A673 (cell line): ENCODE measurements at regions of chr14 and their contacts with region 1.

Region 1: DNA sequence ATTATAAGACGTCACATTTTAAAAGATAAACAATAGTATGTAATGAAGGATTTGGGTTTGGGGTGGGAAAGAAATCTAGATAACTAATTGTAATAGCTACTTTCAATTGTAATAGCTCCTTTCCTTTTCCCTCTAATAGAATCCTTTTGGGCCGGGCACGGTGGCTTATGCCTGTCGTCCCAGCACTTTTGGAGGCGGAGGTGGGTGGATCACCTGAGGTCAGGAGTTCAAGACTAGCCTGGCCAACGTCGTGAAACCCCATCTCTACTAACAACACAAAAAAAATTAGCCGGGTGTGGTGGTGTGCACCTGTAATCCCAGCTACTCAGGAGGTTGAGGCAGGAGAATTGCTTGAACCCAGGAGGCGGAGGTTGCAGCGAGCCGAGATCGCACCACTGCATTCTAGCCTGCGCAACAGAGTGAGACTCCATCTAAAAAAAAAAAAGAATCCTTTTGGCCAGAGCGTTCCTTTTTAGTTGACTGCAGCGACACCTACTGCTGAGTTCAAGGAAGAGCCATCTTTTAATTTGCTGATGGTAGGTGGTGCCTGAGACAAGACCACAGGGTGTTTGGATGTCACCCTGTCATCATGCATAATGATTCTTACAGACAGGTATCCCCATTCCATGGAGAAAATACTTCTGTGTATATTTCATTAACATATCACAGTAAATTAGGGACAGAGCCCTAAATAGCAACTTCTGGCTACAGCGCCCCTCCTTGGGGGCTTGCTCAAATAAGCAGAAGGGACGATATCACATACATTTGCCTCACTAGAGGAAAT is 79.5 kb downstream of the ARMH4 start:
- DNase-seq: peak; percentile 90
- H3K4me3 ChIP-seq: peak overlapping the region; percentile 29
- H3K27ac ChIP-seq: peak overlapping the region; percentile 77
- H3K4me1 ChIP-seq: peaks cover 41% of the 10 kb centered on the region
- H3K27me3 ChIP-seq: no peaks in the 10 kb centered on the region
- CTCF ChIP-seq: peak; percentile 79

Region 2: GRCh38 chr14:57029620-57030253 is 1042.7 kb before region 1 on chr14:
- CTCF ChIA-PET with region 1: no interaction called
- POLR2A ChIA-PET with region 1: no interaction called
- intact Hi-C with region 1: no loop called
- DNase-seq: no peak
- H3K4me3 ChIP-seq: no peak overlapping the region
- H3K27ac ChIP-seq: no peak overlapping the region
- H3K4me1 ChIP-seq: peaks cover 6% of the 10 kb centered on the region
- H3K27me3 ChIP-seq: no peaks in the 10 kb centered on the region
- CTCF ChIP-seq: no peak

Region 3: DNA sequence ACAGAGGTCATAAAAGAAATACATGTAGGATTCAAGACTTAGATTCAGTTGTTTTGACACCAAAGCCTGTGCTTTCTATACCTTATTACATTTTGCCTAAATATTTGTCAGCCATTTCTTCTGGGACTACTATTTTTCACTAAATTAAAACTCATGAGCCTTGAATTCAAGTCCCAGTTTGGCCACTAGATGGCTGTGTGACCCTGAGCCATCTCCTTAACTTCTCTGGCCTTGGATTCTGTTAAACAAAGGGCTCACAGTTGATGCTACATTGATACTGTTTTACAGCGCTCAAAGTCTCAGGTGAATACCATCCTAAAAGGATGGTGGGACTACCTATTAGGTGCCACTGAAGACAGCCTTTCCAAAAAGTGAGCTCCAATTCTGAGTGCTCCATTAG is 539.3 kb before region 1 on chr14:
- CTCF ChIA-PET with region 1: no interaction called
- POLR2A ChIA-PET with region 1: no interaction called
- intact Hi-C with region 1: loop called (anchors 1 kb)
- DNase-seq: peak; percentile 72
- H3K4me3 ChIP-seq: no peak overlapping the region
- H3K27ac ChIP-seq: no peak overlapping the region
- H3K4me1 ChIP-seq: no peaks in the 10 kb centered on the region
- H3K27me3 ChIP-seq: no peaks in the 10 kb centered on the region
- CTCF ChIP-seq: peak; percentile 64

Region 4: DNA sequence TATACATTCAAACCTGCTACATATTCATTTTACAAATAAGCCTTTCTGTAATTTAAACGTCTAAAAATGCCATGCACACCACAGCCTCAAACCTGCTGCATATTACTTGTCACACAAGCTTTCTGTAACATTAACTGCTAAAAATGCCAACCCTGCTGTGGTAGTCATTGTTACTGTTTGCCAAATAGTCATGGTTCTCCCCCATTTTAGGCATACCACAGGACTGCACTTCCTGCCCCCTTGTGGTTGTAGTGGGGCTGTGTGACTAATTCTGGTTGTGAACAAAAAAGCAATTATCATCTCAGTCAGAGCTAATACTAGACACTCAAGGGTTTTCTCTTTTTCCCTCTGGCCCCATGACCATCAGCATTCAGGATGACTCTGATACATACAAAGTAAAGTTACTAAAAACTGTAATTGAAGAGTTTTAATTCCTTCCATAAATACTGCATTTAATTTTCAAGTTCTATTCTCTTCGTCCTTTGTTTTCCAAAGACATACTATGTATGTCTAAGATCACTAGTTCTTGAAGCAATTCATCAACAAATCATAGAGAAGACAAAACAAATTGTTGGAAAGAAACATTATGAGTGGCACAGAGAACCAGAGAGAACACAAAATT is 200.9 kb before region 1 on chr14:
- CTCF ChIA-PET with region 1: no interaction called
- POLR2A ChIA-PET with region 1: no interaction called
- intact Hi-C with region 1: loop called (anchors 2 kb)
- DNase-seq: peak; percentile 90
- H3K4me3 ChIP-seq: no peak overlapping the region
- H3K27ac ChIP-seq: no peak overlapping the region
- H3K4me1 ChIP-seq: peaks cover 14% of the 10 kb centered on the region
- H3K27me3 ChIP-seq: no peaks in the 10 kb centered on the region
- CTCF ChIP-seq: peak; percentile 91

Region 5: DNA sequence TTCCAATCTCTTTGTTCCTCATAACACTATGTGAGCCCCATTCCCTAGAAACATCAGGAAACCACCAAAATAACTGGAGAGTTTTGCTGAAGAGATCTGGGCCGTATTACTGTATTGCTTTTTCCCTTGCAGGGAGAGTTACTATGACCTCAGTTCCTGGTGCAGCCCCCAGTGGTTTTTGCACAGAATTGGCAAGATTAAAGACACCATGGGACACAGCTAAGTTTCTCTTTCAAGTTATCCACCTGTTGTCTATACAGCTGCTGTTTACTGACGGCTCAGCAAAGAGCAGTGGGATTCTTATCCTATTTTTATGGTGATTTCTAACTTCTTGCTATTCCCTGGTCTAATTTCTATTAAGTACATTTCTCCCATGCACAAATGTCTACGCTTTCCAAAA is 129.4 kb before region 1 on chr14:
- CTCF ChIA-PET with region 1: no interaction called
- POLR2A ChIA-PET with region 1: no interaction called
- intact Hi-C with region 1: loop called (anchors 5 kb)
- DNase-seq: peak; percentile 62
- H3K4me3 ChIP-seq: peak overlapping the region; percentile 4
- H3K27ac ChIP-seq: peak overlapping the region; percentile 78
- H3K4me1 ChIP-seq: peaks cover 32% of the 10 kb centered on the region
- H3K27me3 ChIP-seq: no peaks in the 10 kb centered on the region
- CTCF ChIP-seq: no peak

Region 6: DNA sequence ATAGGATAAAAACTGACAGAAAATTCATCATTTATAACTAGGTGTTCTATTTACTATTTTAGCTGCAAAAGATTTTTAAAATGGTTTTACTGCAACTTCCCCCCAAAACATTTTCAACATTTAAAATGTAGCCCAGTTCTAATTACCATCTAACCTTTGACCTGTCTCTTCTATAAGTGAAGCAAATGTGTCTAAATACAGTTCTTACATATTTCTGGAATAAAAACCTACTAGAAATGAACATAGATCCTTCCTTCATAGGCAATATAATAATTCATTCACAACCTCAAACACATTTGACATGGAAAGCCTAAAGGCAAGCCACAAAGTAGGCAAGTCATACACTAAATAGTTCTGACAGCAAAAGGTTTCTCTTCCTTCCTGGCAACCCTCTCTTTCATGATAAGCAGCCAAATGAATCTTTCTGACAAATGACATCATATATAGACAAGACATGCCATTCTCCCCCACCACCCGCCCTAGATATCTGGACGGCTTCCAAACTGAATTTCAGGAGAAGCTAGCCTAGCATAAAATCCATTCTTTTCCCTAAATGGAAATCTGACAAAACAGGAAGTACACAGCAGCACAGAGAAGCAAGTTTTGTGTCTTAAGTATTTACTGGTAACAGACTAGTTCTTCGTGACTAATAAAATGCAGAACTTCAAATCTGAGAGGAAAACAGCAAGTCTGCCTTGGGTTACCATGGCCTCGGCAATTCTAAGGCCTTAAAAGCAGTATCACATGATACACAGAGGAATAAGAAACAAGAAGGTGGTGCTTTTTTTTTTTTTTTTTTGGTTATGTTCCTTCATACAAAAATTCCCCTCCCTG is 208.7 kb after region 1 on chr14:
- CTCF ChIA-PET with region 1: no interaction called
- POLR2A ChIA-PET with region 1: no interaction called
- intact Hi-C with region 1: no loop called
- DNase-seq: peak; percentile 89
- H3K4me3 ChIP-seq: no peak overlapping the region
- H3K27ac ChIP-seq: peak overlapping the region; percentile 78
- H3K4me1 ChIP-seq: peaks cover 21% of the 10 kb centered on the region
- H3K27me3 ChIP-seq: no peaks in the 10 kb centered on the region
- CTCF ChIP-seq: no peak